K562 (cell line): ENCODE measurements at regions of chr16 and their contacts with region 1.

Region 1: DNA sequence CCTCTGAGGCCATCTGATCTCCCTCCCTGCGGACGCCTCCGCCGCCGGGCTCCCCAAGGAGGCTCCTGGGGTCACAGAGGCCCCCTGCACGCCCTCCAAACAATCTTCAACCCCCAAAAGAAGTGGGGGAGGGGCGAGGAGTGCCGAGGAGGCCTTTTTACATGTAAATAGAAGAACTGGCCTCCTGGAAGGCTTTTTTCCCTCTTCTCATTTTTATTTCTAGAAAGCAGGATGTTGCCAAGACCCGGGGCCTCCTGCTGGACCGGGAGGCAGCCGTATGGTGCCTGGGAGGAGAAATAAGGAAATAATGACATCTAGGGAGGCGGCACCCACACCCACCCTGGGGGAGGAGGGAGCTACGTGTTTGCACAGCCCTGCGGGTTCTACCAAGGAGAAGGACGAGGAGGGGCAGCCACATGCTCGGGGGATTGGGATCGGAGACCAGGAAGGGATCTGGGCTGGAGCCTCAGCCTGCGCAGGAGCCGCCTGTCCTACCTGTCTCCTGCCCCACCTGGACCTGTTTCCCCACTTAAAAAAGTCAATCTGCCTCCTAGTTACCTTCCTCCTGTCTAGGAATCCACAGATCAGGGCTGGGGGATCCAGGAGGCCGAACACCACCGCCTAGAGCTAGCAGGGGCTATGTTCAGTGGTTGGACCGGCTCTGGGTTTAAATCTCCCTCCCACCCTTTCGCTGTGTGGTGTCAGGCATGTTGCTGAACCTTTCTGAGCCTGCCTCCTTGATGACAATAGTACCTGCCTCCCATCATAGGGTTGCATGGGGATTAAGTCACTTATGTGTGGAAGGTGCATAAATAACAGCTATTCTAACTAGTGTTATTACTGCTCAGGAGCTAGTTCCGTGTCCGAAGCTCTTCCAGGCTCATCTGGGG is 175.7 kb upstream of the GSE1 start:
- DNase-seq: peak; percentile 73 to 86 (median 80)
- ATAC-seq: peak; percentile 58
- H3K4me3 ChIP-seq: peak overlapping the region; percentile 7; the same call in 1 of the 2 replicates
- H3K27ac ChIP-seq: peak overlapping the region; percentile 72
- H3K4me1 ChIP-seq: peaks cover 26 to 57% of the 10 kb centered on the region in 2 experiments
- H3K27me3 ChIP-seq: no peaks in the 10 kb centered on the region
- CTCF ChIP-seq: peak in 1 of 3 experiments; percentile 4; a peak in 1 of 6 replicates
- EP300 ChIP-seq: 0 out of 2 replicates have a peak, but pooled peaks have one; percentile 1
- POLR2A ChIP-seq: no peak
- RAD21 ChIP-seq: peak in 1 of 2 experiments; percentile 10; a peak in 1 of 4 replicates

Region 2: DNA sequence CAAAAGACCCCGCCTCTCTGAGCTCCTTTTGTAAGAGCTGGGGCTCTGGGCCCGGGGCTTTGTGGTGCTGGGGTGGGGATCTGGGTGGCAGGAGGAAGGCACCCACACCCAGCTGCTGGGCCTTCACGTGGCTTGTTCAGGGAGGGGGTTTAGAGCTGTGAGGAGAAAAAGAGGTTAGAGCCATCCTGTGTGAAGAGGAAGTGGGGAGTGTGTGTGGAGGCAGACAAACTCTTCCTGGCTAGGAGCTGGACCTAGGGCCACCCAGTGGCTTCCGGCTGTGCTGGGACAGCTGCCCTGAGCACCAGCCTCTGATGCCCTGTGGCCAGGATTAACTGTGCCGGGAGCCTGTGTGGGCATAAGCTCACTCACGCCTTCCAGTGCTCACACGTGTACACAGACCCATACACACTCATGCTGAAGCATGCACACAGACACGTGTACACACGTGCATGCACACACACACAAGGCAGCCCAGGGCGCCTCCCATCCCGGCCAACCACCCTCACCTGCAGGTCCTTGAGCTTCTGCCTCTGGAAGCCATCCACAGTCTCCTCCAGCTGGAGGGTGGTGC is 332.5 kb before region 1 on chr16:
- CTCF ChIA-PET with region 1: no interaction called
- POLR2A ChIA-PET with region 1: no interaction called
- in situ Hi-C with region 1: loop called (anchors 5 kb)
- intact Hi-C with region 1: no loop called
- DNase-seq: no peak
- ATAC-seq: peak; percentile 22
- H3K4me3 ChIP-seq: no peak overlapping the region
- H3K27ac ChIP-seq: no peak overlapping the region
- H3K4me1 ChIP-seq: peaks cover 0 to 9% of the 10 kb centered on the region in 2 experiments; a peak in 2 of 5 replicates
- H3K27me3 ChIP-seq: peaks cover 31 to 53% of the 10 kb centered on the region in 2 experiments
- CTCF ChIP-seq: no peak
- EP300 ChIP-seq: no peak
- POLR2A ChIP-seq: no peak
- RAD21 ChIP-seq: no peak

Region 3: DNA sequence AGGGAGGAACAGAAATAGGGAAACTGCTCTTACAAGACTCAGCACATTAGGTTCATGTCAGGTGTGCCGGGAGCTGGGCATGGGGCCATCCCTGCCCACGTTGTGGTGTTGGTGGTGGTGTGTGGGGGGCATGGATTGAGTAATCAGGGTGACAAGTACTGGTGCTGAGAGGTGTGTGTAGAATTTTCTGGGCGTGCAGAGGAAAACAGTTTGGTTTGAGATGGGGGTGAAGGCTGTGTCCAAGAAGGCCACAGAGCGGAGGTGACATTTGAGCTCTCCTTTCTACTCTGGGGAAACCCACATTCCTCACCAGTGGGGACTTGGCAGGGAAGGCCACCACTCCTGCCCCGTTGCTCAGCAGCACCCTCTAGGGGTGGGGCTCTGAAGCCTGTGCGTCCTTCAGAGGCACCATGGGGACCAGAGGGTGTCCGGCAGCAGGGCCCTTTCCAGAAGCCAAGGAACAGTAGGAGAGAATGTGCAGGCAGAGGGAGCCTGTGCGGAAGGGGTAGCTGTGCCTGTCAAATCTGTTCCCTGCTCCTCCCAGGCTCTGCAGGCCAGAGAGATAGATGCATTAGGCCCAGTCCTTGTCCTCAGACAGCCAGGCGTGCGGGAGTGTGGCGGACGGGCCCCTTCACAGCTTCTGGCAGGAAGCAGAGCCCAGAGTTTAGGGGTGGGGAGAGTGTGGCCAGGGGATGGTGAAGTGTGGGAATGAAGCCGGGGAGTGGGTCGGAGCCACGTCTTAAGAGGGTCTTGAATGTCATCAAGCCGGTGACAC is 127.1 kb after region 1 on chr16:
- CTCF ChIA-PET with region 1: interaction called, 10 read pairs
- POLR2A ChIA-PET with region 1: interaction called, 4 read pairs
- in situ Hi-C with region 1: no loop called
- intact Hi-C with region 1: loop called (anchors 1 kb)
- DNase-seq: peak in 3 of 4 experiments; percentile 58 to 81 (median 74)
- ATAC-seq: peak; percentile 4
- H3K4me3 ChIP-seq: no peak overlapping the region
- H3K27ac ChIP-seq: peak overlapping the region; percentile 97
- H3K4me1 ChIP-seq: peaks cover 90 to 98% of the 10 kb centered on the region in 2 experiments
- H3K27me3 ChIP-seq: no peaks in the 10 kb centered on the region
- CTCF ChIP-seq: peak; percentile 89 to 98 (median 92)
- EP300 ChIP-seq: no peak
- POLR2A ChIP-seq: 0 out of 2 replicates have a peak, but pooled peaks have one; percentile 6
- RAD21 ChIP-seq: peak; percentile 30 to 59; a peak in 3 of 4 replicates